ENCODE measurements at regions of chr19 and their contacts with region 1.

Region 1: GRCh38 chr19:17873786-17874757 is 2.3 kb downstream of the SLC5A5 start:
- DNase-seq: peak in 2 of 3 donors; percentile 16 to 68
- ATAC-seq: peak; percentile 44 to 54
- H3K4me3 ChIP-seq: no peak overlapping the region
- H3K27ac ChIP-seq: no peak overlapping the region
- H3K4me1 ChIP-seq: no peaks in the 10 kb centered on the region
- H3K27me3 ChIP-seq: no peaks in the 10 kb centered on the region

Region 2: GRCh38 chr19:17803264-17803922 is 70.7 kb before region 1 on chr19:
- intact Hi-C with region 1: no loop called
- DNase-seq: peak; percentile 29 to 67 (median 58)
- ATAC-seq: peak; percentile 29 to 32
- H3K4me3 ChIP-seq: no peak overlapping the region
- H3K27ac ChIP-seq: no peak overlapping the region
- H3K4me1 ChIP-seq: no peaks in the 10 kb centered on the region
- H3K27me3 ChIP-seq: no peaks in the 10 kb centered on the region

Region 3: GRCh38 chr19:17929056-17929455 is 55.0 kb after region 1 on chr19:
- intact Hi-C with region 1: loop called in 1 of 4 experiments (anchors 10 kb)
- DNase-seq: no peak
- ATAC-seq: no peak
- H3K4me3 ChIP-seq: no peak overlapping the region
- H3K27ac ChIP-seq: no peak overlapping the region
- H3K4me1 ChIP-seq: peaks cover 6% of the 10 kb centered on the region
- H3K27me3 ChIP-seq: no peaks in the 10 kb centered on the region